ENCODE measurements at regions of chr12 and their contacts with region 1.

Region 1: DNA sequence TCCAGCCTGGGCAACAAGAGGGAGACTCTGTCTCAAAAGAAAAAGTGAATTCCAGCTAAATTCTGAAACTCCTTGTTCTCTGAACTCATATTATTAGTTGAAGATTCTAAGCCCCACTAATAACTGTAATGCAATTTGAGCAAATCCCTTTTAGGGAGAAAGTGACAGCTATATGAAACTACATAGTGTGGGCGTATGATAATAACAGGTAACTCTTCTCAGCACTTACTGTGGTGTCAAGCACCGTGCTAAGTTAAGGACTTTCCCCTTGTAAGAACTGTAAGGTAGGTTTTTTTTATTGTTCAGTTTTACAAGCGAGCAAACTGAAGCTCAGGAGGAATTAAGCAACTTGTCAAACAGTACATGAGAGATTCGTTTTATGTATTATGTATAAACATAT is 5.4 kb downstream of the ANKRD13A start:
- DNase-seq: peak; percentile 47
- H3K4me3 Mint-ChIP-seq: no peak overlapping the region
- H3K27ac Mint-ChIP-seq: peak overlapping the region; percentile 79
- H3K4me1 Mint-ChIP-seq: peaks cover 82% of the 10 kb centered on the region
- H3K27me3 Mint-ChIP-seq: no peaks in the 10 kb centered on the region

Region 2: DNA sequence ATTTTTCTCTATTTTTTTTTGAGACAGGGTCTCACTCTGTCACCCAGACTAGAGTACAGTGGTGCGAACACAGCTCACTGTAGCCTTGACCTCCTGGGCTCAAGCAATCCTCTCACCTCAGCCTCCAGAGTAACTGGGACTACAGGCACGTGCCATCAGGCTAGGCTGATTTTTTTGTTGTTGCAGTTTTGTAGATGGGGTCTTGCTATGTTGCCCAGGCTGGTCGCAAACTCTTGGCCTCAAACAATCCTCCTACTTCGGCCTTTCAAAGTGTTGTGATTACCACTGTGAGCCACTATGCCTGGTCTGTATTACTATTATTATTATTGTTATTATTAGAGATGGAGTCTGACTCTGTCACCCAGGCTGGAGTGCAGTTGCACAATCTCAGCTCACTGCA is 31.8 kb before region 1 on chr12:
- CTCF ChIA-PET with region 1: interaction called, 7 read pairs
- intact Hi-C with region 1: loop called (anchors 5 kb)
- DNase-seq: no peak
- H3K4me3 Mint-ChIP-seq: no peak overlapping the region
- H3K27ac Mint-ChIP-seq: no peak overlapping the region
- H3K4me1 Mint-ChIP-seq: peaks cover 23% of the 10 kb centered on the region
- H3K27me3 Mint-ChIP-seq: no peaks in the 10 kb centered on the region

Region 3: DNA sequence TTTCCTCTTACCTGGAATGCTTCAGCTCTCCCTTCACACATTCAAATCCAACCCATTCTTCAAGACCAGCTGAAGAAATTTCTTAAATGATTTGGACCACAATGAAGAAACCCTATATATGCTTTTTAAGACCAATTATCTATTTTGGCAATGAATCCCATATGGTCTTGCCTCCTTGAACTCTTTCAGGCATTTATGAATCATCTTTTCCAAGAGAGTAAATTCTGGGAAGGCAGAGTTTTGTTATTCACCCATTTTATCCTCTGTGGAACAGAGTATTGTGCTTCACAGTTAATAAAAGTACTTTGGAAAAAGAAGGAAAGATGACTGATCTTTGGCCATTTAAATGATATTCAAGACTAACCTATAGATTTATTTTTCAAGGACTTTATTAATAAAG is 22.4 kb before region 1 on chr12:
- CTCF ChIA-PET with region 1: interaction called, 3 read pairs
- intact Hi-C with region 1: loop called (anchors 1 kb)
- DNase-seq: no peak
- H3K4me3 Mint-ChIP-seq: no peak overlapping the region
- H3K27ac Mint-ChIP-seq: no peak overlapping the region
- H3K4me1 Mint-ChIP-seq: peaks cover 66% of the 10 kb centered on the region
- H3K27me3 Mint-ChIP-seq: no peaks in the 10 kb centered on the region

Region 4: DNA sequence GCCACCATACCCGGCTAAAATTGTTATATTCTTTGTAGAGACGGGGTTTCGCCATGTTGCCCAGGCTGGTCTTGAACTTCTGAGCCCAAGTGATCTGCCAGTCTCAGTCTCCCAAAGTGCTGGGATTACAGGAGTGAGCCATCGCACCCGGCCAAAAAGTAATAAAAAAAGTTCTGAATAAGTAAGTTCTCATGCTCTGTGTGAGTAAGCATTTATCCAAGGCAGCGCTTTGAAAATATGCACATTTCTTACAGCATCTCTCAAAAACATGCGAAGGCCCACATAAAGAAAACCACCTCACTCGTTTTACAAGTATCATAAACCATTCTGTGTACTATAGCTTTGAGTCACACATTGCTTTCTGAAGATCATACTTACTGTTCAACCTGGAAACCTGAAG is 17.0 kb before region 1 on chr12:
- CTCF ChIA-PET with region 1: interaction called, 3 read pairs
- intact Hi-C with region 1: loop called (anchors 1 kb)
- DNase-seq: peak; percentile 69
- H3K4me3 Mint-ChIP-seq: no peak overlapping the region
- H3K27ac Mint-ChIP-seq: peak overlapping the region; percentile 84
- H3K4me1 Mint-ChIP-seq: peaks cover 61% of the 10 kb centered on the region
- H3K27me3 Mint-ChIP-seq: no peaks in the 10 kb centered on the region

Region 5: GRCh38 chr12:110023059-110023606 is 18.5 kb after region 1 on chr12:
- CTCF ChIA-PET with region 1: interaction called, 3 read pairs
- intact Hi-C with region 1: loop called (anchors 2 kb)
- DNase-seq: no peak
- H3K4me3 Mint-ChIP-seq: no peak overlapping the region
- H3K27ac Mint-ChIP-seq: no peak overlapping the region
- H3K4me1 Mint-ChIP-seq: peaks cover 21% of the 10 kb centered on the region
- H3K27me3 Mint-ChIP-seq: no peaks in the 10 kb centered on the region

Region 6: GRCh38 chr12:110039085-110039807 is 34.6 kb after region 1 on chr12:
- CTCF ChIA-PET with region 1: interaction called, 4 read pairs
- intact Hi-C with region 1: loop called (anchors 2 kb)
- DNase-seq: peak; percentile 69
- H3K4me3 Mint-ChIP-seq: no peak overlapping the region
- H3K27ac Mint-ChIP-seq: peak overlapping the region; percentile 89
- H3K4me1 Mint-ChIP-seq: peaks cover 38% of the 10 kb centered on the region
- H3K27me3 Mint-ChIP-seq: no peaks in the 10 kb centered on the region

Region 7: DNA sequence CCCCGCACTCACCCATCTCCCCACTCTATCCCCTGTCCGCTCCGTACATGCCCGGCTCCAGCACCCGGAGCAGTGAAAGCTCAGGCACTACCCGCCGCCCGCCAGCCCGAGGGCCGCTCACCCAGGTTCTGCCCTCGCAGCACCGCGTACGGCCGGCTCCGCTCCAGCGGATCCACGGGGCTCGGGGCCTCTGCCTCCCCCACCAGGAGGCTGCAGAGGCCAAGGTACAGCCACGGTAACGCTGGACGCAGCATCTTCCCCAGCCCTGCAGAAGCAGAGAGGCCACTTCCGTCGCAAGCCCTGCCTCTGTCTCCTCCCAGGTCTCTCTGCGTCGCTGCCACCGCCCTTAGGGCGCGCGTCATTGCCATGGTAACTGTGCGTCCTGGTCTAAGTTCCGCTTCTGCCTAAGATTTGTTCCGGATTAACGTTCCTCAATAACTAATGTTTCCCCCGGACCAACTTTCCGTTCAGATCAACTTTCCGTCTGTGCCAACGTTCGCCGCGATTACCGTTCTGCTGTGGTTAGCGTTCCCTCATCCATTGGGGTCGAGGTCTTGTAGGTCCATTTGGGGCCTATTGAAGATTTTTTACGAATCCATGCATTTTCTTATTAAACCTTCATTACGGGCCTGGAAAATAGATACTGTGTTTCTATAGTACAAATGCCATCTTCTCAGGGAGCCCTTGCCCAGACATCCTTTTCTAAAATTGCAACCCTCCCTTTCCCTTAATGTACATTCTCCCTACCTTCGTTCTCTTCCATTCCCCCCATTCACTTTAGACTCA is 43.8 kb after region 1 on chr12 and contains the start of gene C12orf76:
- CTCF ChIA-PET with region 1: no interaction called
- intact Hi-C with region 1: loop called (anchors 2 kb)
- DNase-seq: peak; percentile 96
- H3K4me3 Mint-ChIP-seq: peak within 1 kb of the TSS; percentile 83
- H3K27ac Mint-ChIP-seq: peak within 1 kb of the TSS; percentile 87
- H3K4me1 Mint-ChIP-seq: peaks cover 28% of the 10 kb centered on the region
- H3K27me3 Mint-ChIP-seq: no peaks in the 10 kb centered on the region
- total RNA-seq, gene C12orf76: 12.1 to 12.9 TPM

Measured in activated naive CD4-positive, alpha-beta T cell treated with anti-CD3 and anti-CD28 coated beads for 36 hours (primary cell).